Left ventricle myocardium superior (tissue), 1 donor: ENCODE measurements at regions of chr4 and their contacts with region 1.

Region 1: GRCh38 chr4:85084380-85085094 is 118.0 kb upstream of the WDFY3 start:
- DNase-seq: no peak
- ATAC-seq: peak; percentile 66

Region 2: GRCh38 chr4:84924420-84924819 is 160.1 kb before region 1 on chr4:
- intact Hi-C with region 1: no loop called
- DNase-seq: no peak
- ATAC-seq: no peak

Region 3: GRCh38 chr4:85968945-85969819 is 884.6 kb after region 1 on chr4:
- intact Hi-C with region 1: loop called (anchors 10 kb)
- DNase-seq: no peak
- ATAC-seq: peak; percentile 47